Activated CD4-positive, alpha-beta T cell treated with anti-CD3 and anti-CD28 coated beads, Interleukin-2, amount 10 ng/mL, durations not matched to agents 24 days and 14 days (primary cell): ENCODE measurements at regions of chr12 and their contacts with region 1.

Region 1: GRCh38 chr12:51238510-51239334 is at the start of gene DAZAP2:
- DNase-seq: peak; percentile 97
- H3K4me3 Mint-ChIP-seq: peak within 1 kb of the TSS; percentile 93
- H3K27ac Mint-ChIP-seq: peak within 1 kb of the TSS; percentile 100
- H3K4me1 Mint-ChIP-seq: peaks cover 38% of the 10 kb centered on the region
- H3K27me3 Mint-ChIP-seq: peaks cover 1% of the 10 kb centered on the region
- total RNA-seq, gene DAZAP2: 135 and 146 TPM in 2 replicates

Region 2: GRCh38 chr12:50763639-50764285 is 475.0 kb before region 1 on chr12 and contains the start of gene ATF1:
- intact Hi-C with region 1: loop called (anchors 5 kb)
- DNase-seq: peak; percentile 98
- H3K4me3 Mint-ChIP-seq: peak within 1 kb of the TSS; percentile 94
- H3K27ac Mint-ChIP-seq: peak within 1 kb of the TSS; percentile 99
- H3K4me1 Mint-ChIP-seq: peaks cover 31% of the 10 kb centered on the region
- H3K27me3 Mint-ChIP-seq: no peaks in the 10 kb centered on the region
- total RNA-seq, gene ATF1: 66.0 and 67.6 TPM in 2 replicates

Region 3: DNA sequence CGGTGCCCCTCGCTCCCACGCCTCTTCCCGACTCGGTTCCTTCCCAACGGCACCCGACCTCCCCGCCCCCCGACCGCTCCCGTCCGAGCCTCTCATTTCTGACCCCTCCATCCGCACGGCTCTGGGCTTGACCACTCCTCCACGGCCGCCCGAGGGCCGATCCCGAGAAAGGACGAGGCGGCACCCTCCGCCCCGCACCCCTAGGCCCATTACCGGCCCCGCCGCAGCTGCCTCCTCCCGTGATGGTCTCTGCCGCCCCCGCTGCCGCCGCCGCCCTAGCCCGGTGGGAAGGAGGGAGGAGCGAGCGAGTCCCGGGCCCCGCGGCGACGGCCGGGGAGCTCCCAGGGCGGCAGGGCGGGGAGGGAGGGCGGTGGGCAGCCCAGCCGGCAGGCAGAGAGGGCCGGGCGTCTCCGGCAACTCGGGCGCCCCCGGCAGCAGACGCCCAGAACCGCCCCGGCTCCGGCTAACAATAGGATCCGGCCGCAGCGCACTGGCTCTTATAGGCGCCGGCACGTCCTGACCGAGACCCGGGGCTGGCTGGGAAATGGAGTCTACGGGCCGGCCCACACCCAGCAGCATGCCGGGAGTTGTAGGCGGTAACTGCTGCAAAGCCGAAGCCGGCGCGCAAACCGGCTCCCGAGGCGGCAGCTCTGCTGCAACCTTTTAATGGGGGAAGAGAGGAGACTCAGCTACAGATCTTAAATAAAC is 155.4 kb before region 1 on chr12 and contains the start of gene CSRNP2:
- intact Hi-C with region 1: loop called (anchors 1 kb)
- DNase-seq: peak; percentile 98
- H3K4me3 Mint-ChIP-seq: peak within 1 kb of the TSS; percentile 95
- H3K27ac Mint-ChIP-seq: peak within 1 kb of the TSS; percentile 91
- H3K4me1 Mint-ChIP-seq: peaks cover 29% of the 10 kb centered on the region
- H3K27me3 Mint-ChIP-seq: no peaks in the 10 kb centered on the region
- total RNA-seq, gene CSRNP2: 22.7 and 22.9 TPM in 2 replicates

Region 4: DNA sequence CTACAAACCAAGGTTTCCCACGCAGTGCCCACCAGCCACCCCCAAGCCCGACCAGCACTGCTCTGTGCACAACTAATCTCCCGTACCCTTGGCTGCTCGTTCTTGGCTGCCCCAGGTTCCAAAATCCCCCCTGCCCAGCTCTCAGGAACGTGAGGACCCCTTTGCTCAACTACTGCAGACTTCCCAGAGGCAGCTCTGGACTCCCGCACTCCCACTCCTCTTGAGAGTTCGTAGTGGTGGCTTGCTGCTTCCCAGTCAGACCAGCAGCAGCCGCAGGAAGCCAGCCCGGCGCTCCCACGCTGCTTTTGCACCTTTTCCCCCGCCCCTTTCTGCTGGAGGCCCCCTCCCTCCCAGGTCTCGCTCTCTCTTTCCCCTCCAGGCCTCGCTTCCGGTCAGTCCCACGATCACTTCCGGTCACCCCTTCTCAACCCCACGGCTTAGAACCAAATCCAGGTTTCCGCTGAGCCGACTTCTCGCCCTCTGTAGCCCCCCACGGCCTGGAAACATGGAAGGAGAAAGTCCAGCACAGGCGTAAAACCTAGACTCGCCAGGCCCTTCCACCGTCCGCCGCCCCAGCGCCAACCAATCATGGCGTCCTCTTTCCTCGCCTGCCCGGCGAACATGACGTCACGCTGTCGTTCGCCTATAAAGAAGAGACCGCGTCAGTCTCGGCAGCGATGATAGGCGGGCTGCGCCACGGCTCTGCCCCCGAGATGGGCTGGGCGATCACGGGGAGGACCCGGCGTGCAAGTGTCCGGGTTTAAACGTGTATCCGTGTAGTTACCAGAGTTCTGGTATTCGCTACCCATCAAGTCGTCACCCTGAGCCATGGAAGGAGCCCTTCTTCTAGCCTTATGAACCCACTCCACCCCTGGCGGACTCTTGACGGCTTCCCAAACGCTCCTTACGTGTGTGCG is 65.9 kb before region 1 on chr12 and contains the start of gene TFCP2:
- intact Hi-C with region 1: loop called (anchors 2 kb)
- DNase-seq: peak; percentile 98
- H3K4me3 Mint-ChIP-seq: peak within 1 kb of the TSS; percentile 80
- H3K27ac Mint-ChIP-seq: peak within 1 kb of the TSS; percentile 86
- H3K4me1 Mint-ChIP-seq: peaks cover 12% of the 10 kb centered on the region
- H3K27me3 Mint-ChIP-seq: no peaks in the 10 kb centered on the region
- total RNA-seq, gene TFCP2: 43.1 and 46.3 TPM in 2 replicates

Region 5: DNA sequence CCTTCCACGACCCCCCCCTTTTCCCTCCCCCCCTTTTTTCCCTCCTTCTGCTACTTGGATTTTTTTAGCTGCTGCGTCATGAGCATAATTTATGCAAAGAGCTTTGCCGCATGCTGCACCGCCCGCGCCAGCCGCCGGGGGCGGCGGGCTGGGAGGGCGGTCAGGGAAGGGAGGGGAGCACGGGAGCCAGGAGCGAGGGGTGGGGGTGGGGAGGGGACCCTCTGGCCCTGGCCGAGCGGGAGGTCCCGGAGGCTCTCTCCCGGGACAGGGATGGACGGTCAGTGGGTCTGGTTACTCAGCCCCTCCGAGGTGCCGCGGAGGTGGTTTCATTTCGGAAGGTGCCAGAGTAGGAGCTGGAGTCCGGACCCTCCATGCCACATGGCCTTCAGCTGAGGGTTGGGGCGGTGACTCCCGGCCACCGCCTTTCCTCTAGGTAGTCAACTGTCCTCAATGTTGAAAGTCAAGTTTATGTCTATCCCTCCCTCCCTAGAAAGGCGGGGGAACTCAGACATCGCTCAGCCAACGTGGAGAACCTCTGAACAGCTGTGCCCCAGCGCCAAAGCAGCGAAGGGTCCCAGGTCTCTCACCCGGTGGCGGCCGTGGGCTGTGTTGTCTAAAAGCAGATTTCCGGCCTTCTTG is 20.6 kb before region 1 on chr12 and contains the start of gene POU6F1:
- intact Hi-C with region 1: loop called (anchors 1 kb)
- DNase-seq: peak; percentile 90
- H3K4me3 Mint-ChIP-seq: peak within 1 kb of the TSS; percentile 85
- H3K27ac Mint-ChIP-seq: peak within 1 kb of the TSS; percentile 88
- H3K4me1 Mint-ChIP-seq: peaks cover 13% of the 10 kb centered on the region
- H3K27me3 Mint-ChIP-seq: no peaks in the 10 kb centered on the region
- total RNA-seq, gene POU6F1: 5.1 and 9.0 TPM in 2 replicates

Region 6: DNA sequence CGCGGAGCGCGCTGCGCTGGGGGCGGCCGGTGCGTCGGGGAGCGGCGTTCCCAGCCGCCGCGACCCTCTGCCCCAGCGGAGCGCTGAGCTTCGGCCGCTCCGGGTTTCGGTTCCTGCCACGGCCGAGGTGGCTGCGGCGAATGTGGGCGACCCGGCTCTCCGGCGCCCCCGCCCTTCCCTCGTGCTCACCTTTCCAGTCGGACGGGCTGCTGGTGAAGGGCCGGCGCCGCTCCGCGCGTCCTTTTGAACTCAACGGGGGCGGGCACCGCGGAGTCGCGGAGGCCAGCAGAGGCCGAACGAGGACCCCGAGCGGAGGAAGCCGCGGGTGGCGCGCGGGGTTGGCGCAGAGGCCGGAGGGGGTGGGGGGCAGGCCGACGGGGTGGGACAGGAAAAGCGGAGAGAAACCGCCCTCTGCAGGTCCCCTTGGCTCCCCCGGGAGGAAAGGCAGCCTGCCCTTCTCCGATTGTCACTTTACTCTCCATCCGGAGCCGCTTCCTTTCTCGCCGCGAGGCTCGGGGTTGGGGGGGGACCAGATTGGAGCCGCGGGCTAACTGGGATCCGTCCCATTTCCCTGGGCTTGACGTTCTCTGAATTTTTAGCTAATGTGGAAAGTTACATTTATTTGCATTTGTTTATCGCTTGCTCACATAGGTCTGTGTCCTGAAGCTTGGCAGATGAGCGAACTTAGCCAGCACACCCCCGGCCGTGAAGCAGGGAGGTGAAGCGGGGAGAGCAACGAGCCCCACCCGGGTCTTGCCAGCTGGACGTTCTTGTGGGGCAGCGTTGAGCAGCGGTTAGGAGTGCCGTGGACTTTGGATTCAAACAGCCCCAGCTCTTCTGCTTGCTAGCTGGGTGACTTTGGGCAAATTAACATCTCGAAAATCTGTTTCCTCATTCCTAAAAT is 31.6 kb after region 1 on chr12 and contains the start of gene SMAGP:
- intact Hi-C with region 1: loop called (anchors 2 kb)
- DNase-seq: peak; percentile 86
- H3K4me3 Mint-ChIP-seq: peak within 1 kb of the TSS; percentile 83
- H3K27ac Mint-ChIP-seq: peak within 1 kb of the TSS; percentile 65
- H3K4me1 Mint-ChIP-seq: peaks cover 19% of the 10 kb centered on the region
- H3K27me3 Mint-ChIP-seq: peaks cover 27% of the 10 kb centered on the region
- total RNA-seq, gene SMAGP: 0.24 and 0.26 TPM in 2 replicates